PC-3 (cell line): ENCODE measurements at regions of chr3 and their contacts with region 1.

Region 1: GRCh38 chr3:167406875-167407492 is 26.9 kb upstream of the ZBBX start:
- DNase-seq: peak; percentile 75
- ATAC-seq: peak; percentile 100
- H3K4me3 ChIP-seq: no peak overlapping the region
- H3K27ac ChIP-seq: no peak overlapping the region
- H3K4me1 ChIP-seq: no peaks in the 10 kb centered on the region
- H3K27me3 ChIP-seq: peaks cover 20% of the 10 kb centered on the region
- CTCF ChIP-seq: peak; percentile 89

Region 2: GRCh38 chr3:167684388-167684993 is 277.5 kb after region 1 on chr3:
- CTCF ChIA-PET with region 1: no interaction called
- POLR2A ChIA-PET with region 1: no interaction called
- intact Hi-C with region 1: loop called (anchors 1 kb)
- DNase-seq: peak; percentile 89
- ATAC-seq: peak; percentile 78
- H3K4me3 ChIP-seq: no peak overlapping the region
- H3K27ac ChIP-seq: no peak overlapping the region
- H3K4me1 ChIP-seq: no peaks in the 10 kb centered on the region
- H3K27me3 ChIP-seq: no peaks in the 10 kb centered on the region
- CTCF ChIP-seq: peak; percentile 79

Region 3: GRCh38 chr3:167740961-167741587 is 334.1 kb after region 1 on chr3:
- CTCF ChIA-PET with region 1: no interaction called
- POLR2A ChIA-PET with region 1: no interaction called
- intact Hi-C with region 1: loop called (anchors 1 kb)
- DNase-seq: peak; percentile 59
- ATAC-seq: peak; percentile 96
- H3K4me3 ChIP-seq: no peak overlapping the region
- H3K27ac ChIP-seq: no peak overlapping the region
- H3K4me1 ChIP-seq: peaks cover 10% of the 10 kb centered on the region; the same call in 1 of the 2 replicates
- H3K27me3 ChIP-seq: no peaks in the 10 kb centered on the region
- CTCF ChIP-seq: peak; percentile 67

Region 4: DNA sequence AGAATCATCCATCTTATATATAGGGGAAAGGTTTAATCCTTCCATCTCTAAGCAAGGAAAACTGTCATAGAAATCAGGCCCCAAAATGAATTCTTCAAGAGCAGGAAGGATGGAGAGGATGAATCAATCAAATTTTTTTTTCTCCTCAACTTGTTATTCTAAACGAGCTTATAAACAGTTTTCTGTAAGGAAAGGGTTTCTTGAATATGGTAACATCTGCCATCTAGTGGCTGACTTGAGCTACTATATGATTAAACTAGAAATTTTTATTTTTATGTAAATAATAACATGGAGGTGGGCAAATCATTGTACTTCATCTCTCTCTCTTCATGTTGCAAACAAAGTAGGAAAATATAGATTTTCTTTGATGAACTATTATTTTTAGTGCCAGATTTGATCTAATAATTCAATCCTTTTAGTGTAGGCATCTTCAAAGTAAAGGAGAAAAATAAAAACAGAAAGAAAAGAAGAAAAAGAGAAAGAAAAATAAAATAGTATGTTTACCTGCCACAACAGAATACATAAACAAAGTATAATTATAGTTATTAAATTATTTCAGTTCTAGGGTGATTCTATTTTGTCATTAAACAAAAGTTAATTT is 475.2 kb after region 1 on chr3:
- CTCF ChIA-PET with region 1: no interaction called
- POLR2A ChIA-PET with region 1: no interaction called
- intact Hi-C with region 1: loop called (anchors 2 kb)
- DNase-seq: peak; percentile 73
- ATAC-seq: peak; percentile 45
- H3K4me3 ChIP-seq: no peak overlapping the region
- H3K27ac ChIP-seq: no peak overlapping the region
- H3K4me1 ChIP-seq: peaks cover 17% of the 10 kb centered on the region
- H3K27me3 ChIP-seq: peaks cover 8% of the 10 kb centered on the region; the same call in 1 of the 2 replicates
- CTCF ChIP-seq: peak; percentile 77